Mammary epithelial cell (primary cell): ENCODE measurements at regions of chr12 and their contacts with region 1.

Region 1: GRCh38 chr12:109093022-109093918 is at the start of gene ALKBH2:
- DNase-seq: peak; percentile 84
- H3K4me3 ChIP-seq: peak within 1 kb of the TSS; percentile 59 to 74 (median 65)
- H3K27ac ChIP-seq: peak within 1 kb of the TSS; percentile 70
- H3K4me1 ChIP-seq: peaks cover 13% of the 10 kb centered on the region
- H3K27me3 ChIP-seq: no peaks in the 10 kb centered on the region
- CTCF ChIP-seq: peak; percentile 96 to 98
- total RNA-seq, gene ALKBH2: 15.2 to 23.9 TPM

Region 2: DNA sequence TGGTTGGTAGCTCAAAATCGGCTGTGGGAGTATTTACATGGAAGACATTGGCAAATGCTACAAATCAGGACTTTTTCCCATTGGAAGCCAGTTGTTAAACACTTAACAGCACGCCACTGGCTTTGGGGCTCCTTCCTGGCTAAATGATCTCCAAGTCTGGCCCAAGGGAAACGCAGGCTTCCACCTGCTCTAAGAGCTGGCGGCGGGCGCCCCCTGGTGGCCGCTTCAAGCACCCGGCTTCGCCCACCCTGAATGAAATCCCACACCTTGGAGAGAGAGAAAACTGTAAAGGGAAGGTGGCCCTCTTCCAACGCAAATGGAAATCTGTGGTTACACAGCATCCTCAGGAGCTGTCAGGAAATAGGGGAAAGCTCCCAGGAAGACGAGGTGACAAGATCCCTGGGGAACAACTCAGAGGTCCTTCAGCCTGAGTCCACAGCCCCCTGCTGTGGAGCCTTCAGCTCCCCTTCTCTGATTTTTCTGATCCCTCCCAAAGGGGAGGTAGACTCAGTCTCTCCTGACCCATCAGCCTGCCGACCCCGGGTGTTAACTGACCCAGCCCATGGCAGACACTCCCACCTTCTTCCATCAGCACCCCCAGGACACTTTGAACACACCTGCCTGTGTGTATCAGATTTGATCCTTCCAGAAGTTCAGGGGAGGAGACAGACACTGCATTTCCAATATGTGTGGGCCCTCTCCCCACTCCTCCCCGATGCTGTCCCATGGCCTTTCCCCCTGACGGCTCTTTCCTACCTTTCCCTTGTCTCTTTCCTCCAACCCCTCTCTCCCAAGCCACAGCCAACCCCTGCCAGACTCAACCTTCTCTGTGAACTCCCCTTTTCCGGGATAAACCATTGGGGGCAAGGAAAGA is 475.0 kb before region 1 on chr12:
- CTCF ChIA-PET with region 1: no interaction called
- dilution Hi-C with region 1: no loop called
- in situ Hi-C with region 1: no loop called
- intact Hi-C with region 1: loop called (anchors 1 kb)
- DNase-seq: peak; percentile 57
- H3K4me3 ChIP-seq: no peak overlapping the region
- H3K27ac ChIP-seq: no peak overlapping the region
- H3K4me1 ChIP-seq: peaks cover 6% of the 10 kb centered on the region
- H3K27me3 ChIP-seq: no peaks in the 10 kb centered on the region
- CTCF ChIP-seq: peak; percentile 72 to 97

Region 3: GRCh38 chr12:108731105-108731865 is 362.0 kb before region 1 on chr12 and contains the start of gene CORO1C:
- CTCF ChIA-PET with region 1: no interaction called
- dilution Hi-C with region 1: no loop called
- in situ Hi-C with region 1: no loop called
- intact Hi-C with region 1: loop called (anchors 5 kb)
- DNase-seq: peak; percentile 95
- H3K4me3 ChIP-seq: peak within 1 kb of the TSS; percentile 87 to 99 (median 98)
- H3K27ac ChIP-seq: peak within 1 kb of the TSS; percentile 99
- H3K4me1 ChIP-seq: peaks cover 37% of the 10 kb centered on the region
- H3K27me3 ChIP-seq: no peaks in the 10 kb centered on the region
- CTCF ChIP-seq: peak; percentile 75 to 88
- total RNA-seq, gene CORO1C: 173 to 245 TPM

Region 4: DNA sequence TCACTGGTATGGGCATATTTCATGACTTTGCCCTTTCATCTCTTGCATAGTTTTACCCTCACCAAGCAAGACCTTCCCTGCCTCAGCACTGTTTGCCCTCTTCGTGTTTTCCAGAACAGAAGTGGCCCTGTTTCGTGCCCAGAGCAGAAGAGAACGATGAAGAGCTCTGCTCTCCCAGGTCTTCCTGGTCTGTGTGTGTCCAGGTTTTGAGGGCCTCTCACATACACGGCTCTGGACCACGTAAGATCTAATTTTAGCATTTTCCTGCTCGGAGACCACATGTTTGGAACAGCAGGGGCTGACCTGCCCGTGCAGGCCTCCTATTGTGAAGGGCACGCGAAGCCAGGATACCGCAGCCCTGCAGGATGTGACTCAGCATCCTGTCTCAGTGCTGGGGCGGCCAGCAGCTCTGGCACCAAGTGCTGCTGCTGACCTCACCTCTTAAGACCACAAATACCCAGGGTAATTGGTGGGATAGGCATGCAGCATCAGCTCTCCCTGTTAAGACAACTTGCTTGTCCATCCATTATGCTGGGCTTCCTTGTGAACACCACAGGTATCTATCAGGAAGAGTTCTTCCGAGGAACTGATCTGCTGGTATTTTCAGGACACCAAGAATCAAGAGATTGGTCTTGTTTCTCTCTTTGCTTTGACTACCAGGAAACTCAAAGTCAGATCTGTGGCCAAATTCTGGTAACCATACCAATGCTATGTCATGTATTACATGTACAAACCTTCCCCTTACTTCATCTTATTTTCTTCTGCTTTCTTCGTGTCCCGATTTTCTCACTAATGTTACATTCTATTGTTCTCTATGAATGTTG is 254.9 kb before region 1 on chr12:
- CTCF ChIA-PET with region 1: no interaction called
- dilution Hi-C with region 1: loop called (anchors 10 kb)
- in situ Hi-C with region 1: no loop called
- intact Hi-C with region 1: no loop called
- DNase-seq: peak; percentile 99
- H3K4me3 ChIP-seq: no peak overlapping the region
- H3K27ac ChIP-seq: peak overlapping the region; percentile 97
- H3K4me1 ChIP-seq: peaks cover 84% of the 10 kb centered on the region
- H3K27me3 ChIP-seq: no peaks in the 10 kb centered on the region
- CTCF ChIP-seq: no peak

Region 5: GRCh38 chr12:108950991-108951739 is 142.1 kb before region 1 on chr12:
- CTCF ChIA-PET with region 1: no interaction called
- dilution Hi-C with region 1: no loop called
- in situ Hi-C with region 1: no loop called
- intact Hi-C with region 1: loop called (anchors 1 kb)
- DNase-seq: peak; percentile 68
- H3K4me3 ChIP-seq: peak overlapping the region in 1 of 3 experiments; percentile 26
- H3K27ac ChIP-seq: no peak overlapping the region
- H3K4me1 ChIP-seq: peaks cover 24% of the 10 kb centered on the region
- H3K27me3 ChIP-seq: no peaks in the 10 kb centered on the region
- CTCF ChIP-seq: peak; percentile 81 to 87

Region 6: GRCh38 chr12:109239179-109239578 is 145.9 kb after region 1 on chr12:
- CTCF ChIA-PET with region 1: no interaction called
- dilution Hi-C with region 1: no loop called
- in situ Hi-C with region 1: no loop called
- intact Hi-C with region 1: no loop called
- DNase-seq: no peak
- H3K4me3 ChIP-seq: no peak overlapping the region
- H3K27ac ChIP-seq: no peak overlapping the region
- H3K4me1 ChIP-seq: no peaks in the 10 kb centered on the region
- H3K27me3 ChIP-seq: no peaks in the 10 kb centered on the region
- CTCF ChIP-seq: no peak